ENCODE measurements at regions of chr10 and their contacts with region 1.

Region 1: GRCh38 chr10:117442944-117443685 is 67.9 kb upstream of the PDZD8 start:
- DNase-seq: peak; percentile 89

Region 2: GRCh38 chr10:117370205-117370604 is 72.9 kb before region 1 on chr10:
- CTCF ChIA-PET with region 1: interaction called, 12 read pairs
- POLR2A ChIA-PET with region 1: interaction called, 3 read pairs
- DNase-seq: no peak

Region 3: GRCh38 chr10:117411479-117412399 is 31.4 kb before region 1 on chr10:
- CTCF ChIA-PET with region 1: no interaction called
- POLR2A ChIA-PET with region 1: no interaction called
- DNase-seq: no peak

Region 4: DNA sequence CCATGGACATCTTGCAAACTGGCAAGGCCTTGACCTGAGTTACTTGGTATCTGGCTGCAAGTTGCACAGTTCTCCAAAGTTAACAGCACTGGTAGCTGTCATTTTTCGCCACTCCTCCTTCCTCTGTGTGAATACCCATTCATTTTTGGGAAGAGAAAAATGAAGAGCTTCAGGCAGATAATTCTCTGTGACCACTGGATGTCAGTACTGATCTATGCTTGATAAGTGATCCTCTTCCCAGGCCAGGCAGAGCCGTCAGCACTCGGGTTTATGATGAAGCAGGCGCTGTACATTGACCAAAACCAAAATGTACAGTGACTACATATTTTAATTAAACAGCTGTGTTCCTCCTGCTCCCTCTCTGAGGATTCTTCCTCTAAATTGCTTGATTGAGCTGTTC is 12.0 kb before region 1 on chr10:
- CTCF ChIA-PET with region 1: interaction called, 40 read pairs
- POLR2A ChIA-PET with region 1: no interaction called
- DNase-seq: no peak

Region 5: GRCh38 chr10:117461766-117462423 is 18.8 kb after region 1 on chr10:
- CTCF ChIA-PET with region 1: interaction called, 21 read pairs
- POLR2A ChIA-PET with region 1: interaction called, 5 read pairs
- DNase-seq: peak; percentile 74